ENCODE measurements at regions of chr4 and their contacts with region 1.

Region 1: GRCh38 chr4:145732895-145733880 is 53.2 kb downstream of the C4orf51 start:
- DNase-seq: peak; percentile 96
- ATAC-seq: peak; percentile 96

Region 2: GRCh38 chr4:145180298-145181090 is 552.7 kb before region 1 on chr4 and contains the start of gene OTUD4:
- intact Hi-C with region 1: loop called (anchors 10 kb)
- DNase-seq: peak; percentile 96
- ATAC-seq: peak; percentile 99
- total RNA-seq, gene OTUD4: 64.5 TPM

Region 3: DNA sequence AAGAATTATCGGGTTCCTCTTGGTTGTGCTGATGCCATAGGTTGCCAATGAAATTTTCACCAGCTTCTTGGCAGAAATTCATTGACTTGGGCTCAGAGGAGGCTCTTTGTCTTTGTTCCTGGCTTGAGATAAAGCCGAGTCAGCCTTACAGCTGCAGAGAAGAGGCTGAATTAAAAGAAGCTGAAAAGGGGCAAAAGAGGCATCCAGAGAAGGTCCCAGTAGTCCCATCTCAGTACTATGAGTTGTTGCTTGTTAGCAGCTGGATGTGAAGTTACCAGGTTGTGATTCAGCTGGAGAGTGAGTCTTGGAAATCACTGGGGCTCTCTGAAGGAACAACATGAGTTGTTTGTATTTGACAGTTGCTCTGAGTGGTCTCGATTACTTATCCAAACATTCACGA is 191.8 kb before region 1 on chr4:
- intact Hi-C with region 1: no loop called
- DNase-seq: no peak
- ATAC-seq: peak; percentile 74

Region 4: GRCh38 chr4:145618932-145619638 is 114.1 kb before region 1 on chr4 and contains the start of gene MMAA:
- intact Hi-C with region 1: loop called (anchors 5 kb)
- DNase-seq: peak; percentile 98
- ATAC-seq: peak; percentile 99
- total RNA-seq, gene MMAA: 8.4 TPM

Measured in sciatic nerve (tissue), 2 donors.